ENCODE measurements at regions of chr7 and their contacts with region 1.

Region 1: DNA sequence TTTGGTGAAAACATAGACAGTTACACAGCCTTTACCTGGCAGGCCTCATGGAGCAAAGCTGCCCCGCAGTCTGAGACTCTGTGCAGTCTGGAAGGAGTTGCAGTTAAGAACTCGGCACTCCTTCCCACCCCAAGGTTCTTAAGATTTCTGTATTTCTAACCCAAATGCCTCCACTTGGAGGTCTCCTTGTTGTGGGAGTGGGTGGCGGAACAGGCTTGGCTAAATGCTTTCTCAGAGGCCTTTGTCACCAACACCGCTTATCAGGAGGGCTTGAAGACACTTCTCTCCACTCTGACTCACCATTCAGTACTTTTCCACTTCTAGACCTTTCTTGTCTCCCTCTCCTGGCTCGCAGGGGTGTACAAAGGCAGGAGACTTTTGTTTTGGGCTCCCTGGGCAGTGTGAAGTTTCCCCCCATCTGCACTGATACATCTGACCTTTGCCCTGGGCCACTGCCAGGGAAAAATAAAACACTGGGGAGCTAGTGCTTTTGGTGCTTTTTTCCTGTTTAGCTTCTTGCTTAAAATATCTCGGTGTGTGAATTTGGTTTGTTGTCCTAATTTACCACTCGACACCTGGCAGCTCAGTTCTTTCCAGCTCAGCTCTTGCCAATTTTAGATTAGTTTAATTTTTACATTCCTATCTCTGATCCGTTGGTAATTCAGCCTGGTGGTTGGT is 51.4 kb upstream of the MAGI2 start:
- DNase-seq: no peak
- ATAC-seq: no peak

Region 2: DNA sequence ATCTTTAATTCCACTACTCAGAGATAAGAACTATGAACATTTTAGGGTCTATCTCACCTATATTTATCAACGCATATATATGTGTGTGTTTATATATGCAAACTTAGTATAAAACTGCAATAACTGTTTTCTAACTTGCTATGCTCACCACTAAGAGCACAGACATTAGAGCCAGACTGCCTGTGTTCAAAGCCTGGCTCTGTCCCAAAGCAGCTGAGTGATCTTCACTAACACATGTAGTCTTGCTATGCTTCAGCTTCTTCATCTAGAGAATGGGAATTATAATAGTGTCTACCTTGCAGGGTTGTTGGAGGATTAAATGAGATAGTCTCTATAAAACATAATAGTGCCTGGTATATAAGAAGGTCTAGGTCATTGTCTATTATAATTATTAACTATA is 216.9 kb before region 1 on chr7:
- intact Hi-C with region 1: no loop called
- DNase-seq: no peak
- ATAC-seq: no peak

Region 3: GRCh38 chr7:79553811-79554555 is 49.1 kb after region 1 on chr7:
- intact Hi-C with region 1: loop called in 1 of 2 experiments (anchors 2 kb)
- DNase-seq: no peak
- ATAC-seq: no peak

Measured in left colon (tissue), 2 donors.